PC-3 (cell line): ENCODE measurements at regions of chr3 and their contacts with region 1.

Region 1: DNA sequence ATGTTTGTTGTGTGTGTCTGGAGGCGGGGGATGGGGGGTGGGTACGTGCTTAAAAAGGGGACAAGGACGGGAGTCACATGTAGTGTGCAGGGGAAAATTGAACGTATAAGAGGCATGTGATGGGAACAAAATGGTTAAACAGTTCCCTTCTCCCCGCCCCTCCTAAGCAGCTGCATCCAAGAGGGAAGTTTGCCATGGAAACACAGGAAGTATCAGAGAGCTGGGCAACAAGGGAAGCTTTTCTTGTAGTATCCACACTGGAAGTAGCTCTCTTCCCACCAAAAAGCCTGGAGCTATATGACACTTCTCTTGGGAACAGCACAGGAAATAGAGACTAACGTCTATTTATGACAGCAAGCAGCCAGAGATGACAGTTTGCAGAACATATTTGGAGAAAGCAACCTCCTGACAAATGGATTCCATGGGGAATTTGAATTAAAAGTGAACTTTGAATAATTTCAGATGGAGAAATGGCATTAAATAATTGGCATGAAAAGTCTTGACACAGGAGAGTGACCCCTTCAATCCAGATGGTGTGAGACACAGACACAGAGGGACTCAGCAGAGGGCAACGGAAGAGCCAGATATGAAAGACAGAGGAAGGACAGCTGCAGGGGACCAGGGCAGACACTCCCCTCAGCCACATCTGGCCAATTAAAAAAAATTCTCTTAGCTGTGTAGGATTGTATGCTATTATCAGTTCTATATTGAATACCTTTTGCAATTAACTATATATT is 294.2 kb upstream of the TBL1XR1 start:
- DNase-seq: peak; percentile 35
- ATAC-seq: peak; percentile 64
- H3K4me3 ChIP-seq: no peak overlapping the region
- H3K27ac ChIP-seq: no peak overlapping the region
- H3K4me1 ChIP-seq: peaks cover 7% of the 10 kb centered on the region
- H3K27me3 ChIP-seq: no peaks in the 10 kb centered on the region
- CTCF ChIP-seq: no peak

Region 2: DNA sequence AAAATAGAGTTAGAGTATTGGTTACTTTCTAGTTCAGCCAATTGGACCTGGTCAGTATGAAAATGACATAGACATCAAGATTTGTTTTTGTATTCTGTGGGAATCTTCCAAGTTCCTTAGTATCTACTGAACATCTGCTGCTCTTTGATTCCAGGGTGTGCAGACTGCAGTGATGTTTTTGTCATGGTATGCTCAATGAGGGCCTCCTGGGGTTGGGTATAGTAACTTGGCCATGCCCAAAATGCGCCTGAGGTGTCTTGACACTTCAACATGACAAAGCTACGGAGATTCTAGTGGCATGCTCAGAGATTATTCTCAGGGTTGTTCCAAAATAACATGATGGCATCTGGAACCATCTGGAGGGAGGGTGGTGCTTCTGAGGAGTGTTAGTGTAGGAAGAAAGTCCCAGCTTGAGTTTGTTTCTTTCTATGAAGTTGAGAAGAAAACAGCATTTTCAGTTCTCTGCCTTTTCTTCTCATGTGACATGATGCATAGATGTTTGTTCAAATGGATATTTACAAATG is 19.3 kb after region 1 on chr3:
- CTCF ChIA-PET with region 1: no interaction called
- POLR2A ChIA-PET with region 1: interaction called, 22 read pairs
- intact Hi-C with region 1: no loop called
- DNase-seq: no peak
- ATAC-seq: no peak
- H3K4me3 ChIP-seq: no peak overlapping the region
- H3K27ac ChIP-seq: no peak overlapping the region
- H3K4me1 ChIP-seq: no peaks in the 10 kb centered on the region
- H3K27me3 ChIP-seq: no peaks in the 10 kb centered on the region
- CTCF ChIP-seq: no peak